Endothelial cell of umbilical vein (primary cell): ENCODE measurements at regions of chr18 and their contacts with region 1.

Region 1: GRCh38 chr18:62249478-62250097 is 62.5 kb downstream of the RELCH start:
- DNase-seq: peak; percentile 81
- H3K4me3 ChIP-seq: no peak overlapping the region
- H3K27ac ChIP-seq: no peak overlapping the region
- H3K4me1 ChIP-seq: no peaks in the 10 kb centered on the region
- H3K27me3 ChIP-seq: no peaks in the 10 kb centered on the region
- CTCF ChIP-seq: peak; percentile 44 to 71
- POLR2A ChIP-seq: no peak

Region 2: DNA sequence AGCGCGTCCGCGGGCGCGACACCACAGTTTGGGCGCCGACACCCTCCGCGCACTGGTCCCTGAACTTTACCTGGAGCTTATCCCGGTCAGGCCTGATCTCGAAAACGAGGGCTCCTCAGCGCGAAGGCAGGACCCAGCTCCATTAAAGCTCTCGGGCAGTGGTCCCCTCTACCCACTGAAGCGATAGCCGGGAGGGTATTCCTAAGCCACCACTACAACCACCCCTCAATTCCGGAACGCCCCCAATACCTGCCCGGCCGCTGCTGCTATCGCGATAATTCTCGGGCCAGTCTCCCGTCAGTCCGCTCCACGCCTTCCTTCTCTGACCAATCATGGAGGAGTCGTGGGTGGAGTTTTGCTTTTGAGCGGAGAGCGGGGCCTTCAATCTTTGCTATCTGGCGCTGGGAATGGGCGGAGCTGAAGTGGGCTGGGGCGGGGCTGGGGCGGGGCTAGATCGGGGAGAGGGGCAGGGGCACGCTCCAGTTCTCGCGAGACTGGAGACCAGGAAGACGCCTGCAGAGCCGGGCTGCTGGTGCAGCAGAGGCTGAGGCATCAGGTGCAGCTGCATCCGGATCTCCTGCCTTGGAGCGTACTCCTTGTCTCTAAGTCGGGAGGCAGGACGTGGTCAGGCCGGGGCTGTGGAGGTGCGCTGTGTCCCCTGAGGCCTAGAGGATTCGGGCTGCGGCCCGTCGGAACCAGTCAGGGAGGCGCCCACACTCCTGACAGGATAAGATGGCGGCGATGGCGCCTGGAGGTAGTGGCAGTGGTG is 62.6 kb before region 1 on chr18 and contains the starts of genes PIGN and RELCH:
- CTCF ChIA-PET with region 1: interaction called, 36 read pairs
- POLR2A ChIA-PET with region 1: no interaction called
- dilution Hi-C with region 1: no loop called
- intact Hi-C with region 1: loop called (anchors 1 kb)
- DNase-seq: peak; percentile 99
- H3K4me3 ChIP-seq: peak within 1 kb of the TSS; percentile 86 to 97 (median 94)
- H3K27ac ChIP-seq: peak within 1 kb of the TSS; percentile 79
- H3K4me1 ChIP-seq: peaks cover 34% of the 10 kb centered on the region
- H3K27me3 ChIP-seq: no peaks in the 10 kb centered on the region
- CTCF ChIP-seq: no peak
- POLR2A ChIP-seq: peak; percentile 88
- total RNA-seq, gene PIGN: 26.1 and 31.1 TPM in 2 replicates
- total RNA-seq, gene RELCH: 20.7 and 25.2 TPM in 2 replicates

Region 3: DNA sequence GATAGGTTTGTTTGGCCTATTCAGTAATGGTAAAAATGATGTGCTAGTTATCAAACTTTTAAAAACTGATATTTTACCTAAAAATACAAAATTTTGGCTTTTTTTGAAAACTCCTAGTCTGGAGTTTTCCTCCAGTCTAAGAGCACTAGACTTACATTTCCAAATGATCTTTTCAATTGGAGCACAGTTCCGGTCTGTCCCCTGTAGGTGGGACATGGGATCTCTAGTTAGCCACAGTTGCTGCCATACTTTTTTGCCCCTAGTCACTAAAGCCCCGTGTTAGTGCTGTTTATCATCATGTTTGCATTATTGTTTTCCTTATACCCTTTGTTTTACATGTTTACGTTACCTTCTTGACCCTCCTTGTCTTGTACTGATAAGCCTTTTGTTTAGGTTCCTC is 10.1 kb before region 1 on chr18:
- CTCF ChIA-PET with region 1: interaction called, 11 read pairs
- POLR2A ChIA-PET with region 1: no interaction called
- dilution Hi-C with region 1: no loop called
- intact Hi-C with region 1: no loop called
- DNase-seq: no peak
- H3K4me3 ChIP-seq: no peak overlapping the region
- H3K27ac ChIP-seq: no peak overlapping the region
- H3K4me1 ChIP-seq: peaks cover 2% of the 10 kb centered on the region
- H3K27me3 ChIP-seq: no peaks in the 10 kb centered on the region
- CTCF ChIP-seq: no peak
- POLR2A ChIP-seq: no peak

Region 4: DNA sequence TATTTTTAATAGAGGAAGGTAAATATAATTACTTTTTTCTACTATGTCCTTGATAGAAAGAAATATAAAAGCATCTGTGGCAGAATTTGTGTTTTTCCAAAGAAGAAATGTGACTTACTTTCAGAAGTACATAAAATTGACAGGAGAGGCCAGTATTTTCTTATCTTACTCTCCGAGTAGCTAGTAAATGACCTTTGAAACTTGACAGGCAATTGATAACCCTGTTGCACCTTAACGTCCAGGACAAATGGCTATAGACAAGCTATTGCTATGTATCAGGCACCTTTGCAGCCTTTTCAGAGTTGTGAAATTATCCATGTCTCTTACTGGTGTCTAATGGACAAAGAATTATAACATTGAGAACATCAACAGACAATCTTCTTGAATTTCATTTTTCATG is 12.5 kb after region 1 on chr18:
- CTCF ChIA-PET with region 1: interaction called, 15 read pairs
- POLR2A ChIA-PET with region 1: no interaction called
- dilution Hi-C with region 1: no loop called
- intact Hi-C with region 1: no loop called
- DNase-seq: no peak
- H3K4me3 ChIP-seq: no peak overlapping the region
- H3K27ac ChIP-seq: no peak overlapping the region
- H3K4me1 ChIP-seq: no peaks in the 10 kb centered on the region
- H3K27me3 ChIP-seq: no peaks in the 10 kb centered on the region
- CTCF ChIP-seq: no peak
- POLR2A ChIP-seq: no peak